Dorsolateral prefrontal cortex (tissue), 120 donors: ENCODE measurements at regions of chr12 and their contacts with region 1.

Region 1: DNA sequence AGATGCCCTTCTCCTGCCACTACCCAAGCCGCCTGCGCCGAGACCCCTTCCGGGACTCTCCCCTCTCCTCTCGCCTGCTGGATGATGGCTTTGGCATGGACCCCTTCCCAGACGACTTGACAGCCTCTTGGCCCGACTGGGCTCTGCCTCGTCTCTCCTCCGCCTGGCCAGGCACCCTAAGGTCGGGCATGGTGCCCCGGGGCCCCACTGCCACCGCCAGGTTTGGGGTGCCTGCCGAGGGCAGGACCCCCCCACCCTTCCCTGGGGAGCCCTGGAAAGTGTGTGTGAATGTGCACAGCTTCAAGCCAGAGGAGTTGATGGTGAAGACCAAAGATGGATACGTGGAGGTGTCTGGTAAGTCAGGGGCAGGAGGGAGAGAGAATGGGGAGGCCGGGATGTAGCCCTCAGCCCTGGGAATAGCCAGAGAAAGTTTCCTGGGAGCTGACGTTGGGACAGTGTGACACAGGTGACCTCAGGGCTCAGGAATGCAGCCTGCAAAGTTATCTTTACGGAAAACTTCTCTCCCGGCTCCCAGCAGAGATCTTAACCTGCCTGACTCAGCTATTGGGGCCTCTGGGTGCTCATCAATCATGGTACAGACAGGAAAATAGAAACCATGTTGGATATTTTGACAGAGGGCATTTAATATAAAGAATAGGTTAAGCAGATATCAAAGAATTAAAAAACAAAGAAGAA is 743 bp downstream of the HSPB8 start:
- DNase-seq: no peak
- H3K4me3 ChIP-seq: peak overlapping the region; percentile 22 to 77 (median 63)
- H3K27ac ChIP-seq: peak overlapping the region in 58 of 59 donors; percentile 35 to 97 (median 86)
- H3K27me3 ChIP-seq: peaks cover 0 to 42% (median 0%) of the 10 kb centered on the region in 45 donors
- CTCF ChIP-seq: no peak

Region 2: GRCh38 chr12:119208622-119209061 is 29.2 kb after region 1 on chr12:
- intact Hi-C with region 1: loop called in 1 of 2 experiments (anchors 1 kb)
- DNase-seq: peak in 6 of 10 donors; percentile 29 to 70 (median 49)
- H3K4me3 ChIP-seq: no peak overlapping the region
- H3K27ac ChIP-seq: peak overlapping the region in 6 of 59 donors; percentile 4 to 50 (median 32)
- H3K27me3 ChIP-seq: no peaks in the 10 kb centered on the region
- CTCF ChIP-seq: no peak